A549 (cell line): ENCODE measurements at regions of chr11 and their contacts with region 1.

Region 1: DNA sequence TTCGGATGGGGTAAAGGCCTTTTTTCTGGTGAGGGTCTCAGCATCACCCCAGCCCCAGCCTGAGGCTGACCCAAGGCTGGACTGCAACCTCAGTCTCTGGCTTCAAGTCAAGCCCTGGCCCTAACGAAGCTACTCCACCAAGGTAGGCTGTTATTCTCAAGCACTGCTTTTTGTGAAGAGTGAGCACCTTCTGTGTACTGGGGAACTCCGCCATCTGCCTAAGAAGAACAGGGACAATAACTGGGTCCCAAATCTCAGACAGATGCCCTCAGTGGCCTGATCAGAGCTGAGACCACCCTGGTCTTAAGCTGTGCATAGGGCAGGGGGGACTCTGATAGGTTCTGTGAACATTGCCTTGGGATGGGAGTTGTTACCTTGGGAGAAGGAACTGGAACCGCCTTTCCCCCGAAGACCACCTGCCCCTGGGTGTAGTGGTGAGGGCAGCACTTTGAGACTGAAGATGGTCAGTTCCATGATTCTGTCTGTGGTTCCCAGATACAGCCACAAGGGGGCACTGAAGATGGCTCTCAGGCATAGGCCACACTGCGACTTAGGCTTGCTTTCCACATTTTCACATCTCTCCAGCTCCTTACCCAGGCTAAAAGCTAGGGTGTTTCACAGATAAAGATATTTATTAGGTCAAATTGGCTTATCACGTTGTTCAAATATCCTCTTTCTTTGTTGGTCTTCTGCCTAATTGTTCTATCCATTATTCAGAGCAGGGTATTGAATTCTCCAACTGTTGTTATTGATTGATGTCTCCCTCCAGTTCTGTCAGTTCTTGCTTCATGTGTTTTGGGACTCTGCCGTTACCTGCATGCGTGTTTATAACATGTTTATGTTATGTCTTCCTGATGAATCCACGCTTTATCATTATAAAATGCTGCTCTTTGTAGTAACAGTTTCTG is 11.8 kb upstream of the UVRAG start:
- DNase-seq: peak; percentile 68 to 82
- ATAC-seq: peak; percentile 87 to 98
- H3K4me3 ChIP-seq: no peak overlapping the region
- H3K27ac ChIP-seq: no peak overlapping the region
- H3K4me1 ChIP-seq: no peaks in the 10 kb centered on the region
- CTCF ChIP-seq: peak; percentile 84
- EP300 ChIP-seq: no peak
- POLR2A ChIP-seq: no peak
- RAD21 ChIP-seq: peak; percentile 76 to 83

Region 2: GRCh38 chr11:75560644-75561043 is 242.5 kb before region 1 on chr11:
- CTCF ChIA-PET with region 1: no interaction called
- POLR2A ChIA-PET with region 1: no interaction called
- DNase-seq: no peak
- ATAC-seq: no peak
- H3K4me3 ChIP-seq: no peak overlapping the region
- H3K27ac ChIP-seq: peak overlapping the region in 1 of 2 experiments; percentile 97; a peak in 3 of 6 replicates
- H3K4me1 ChIP-seq: peaks cover 54% of the 10 kb centered on the region
- CTCF ChIP-seq: no peak
- EP300 ChIP-seq: no peak
- POLR2A ChIP-seq: no peak
- RAD21 ChIP-seq: no peak

Region 3: DNA sequence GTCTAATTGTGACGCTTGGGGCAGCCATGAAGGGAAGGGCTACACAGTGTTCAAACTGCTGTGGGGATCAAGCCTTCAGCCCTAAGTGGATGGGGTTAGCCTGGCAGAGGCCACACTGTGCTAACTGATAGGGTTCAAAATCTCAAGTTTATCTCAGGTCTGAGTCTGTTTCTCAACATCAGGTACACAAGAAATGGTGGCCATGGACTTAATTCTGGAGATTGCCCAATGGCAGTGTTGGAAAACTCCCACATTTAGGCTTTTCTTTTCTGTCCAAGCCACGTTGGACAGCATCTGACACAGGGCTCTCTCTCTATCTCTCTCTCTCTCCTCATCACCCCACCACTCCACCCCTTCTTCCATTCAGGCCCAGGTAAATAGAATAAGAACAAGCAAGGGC is 45.5 kb before region 1 on chr11:
- CTCF ChIA-PET with region 1: no interaction called
- POLR2A ChIA-PET with region 1: no interaction called
- DNase-seq: no peak
- ATAC-seq: no peak
- H3K4me3 ChIP-seq: no peak overlapping the region
- H3K27ac ChIP-seq: no peak overlapping the region
- H3K4me1 ChIP-seq: peaks cover 10% of the 10 kb centered on the region; the same call in 2 of the 3 replicates
- CTCF ChIP-seq: no peak
- EP300 ChIP-seq: no peak
- POLR2A ChIP-seq: no peak
- RAD21 ChIP-seq: no peak

Region 4: DNA sequence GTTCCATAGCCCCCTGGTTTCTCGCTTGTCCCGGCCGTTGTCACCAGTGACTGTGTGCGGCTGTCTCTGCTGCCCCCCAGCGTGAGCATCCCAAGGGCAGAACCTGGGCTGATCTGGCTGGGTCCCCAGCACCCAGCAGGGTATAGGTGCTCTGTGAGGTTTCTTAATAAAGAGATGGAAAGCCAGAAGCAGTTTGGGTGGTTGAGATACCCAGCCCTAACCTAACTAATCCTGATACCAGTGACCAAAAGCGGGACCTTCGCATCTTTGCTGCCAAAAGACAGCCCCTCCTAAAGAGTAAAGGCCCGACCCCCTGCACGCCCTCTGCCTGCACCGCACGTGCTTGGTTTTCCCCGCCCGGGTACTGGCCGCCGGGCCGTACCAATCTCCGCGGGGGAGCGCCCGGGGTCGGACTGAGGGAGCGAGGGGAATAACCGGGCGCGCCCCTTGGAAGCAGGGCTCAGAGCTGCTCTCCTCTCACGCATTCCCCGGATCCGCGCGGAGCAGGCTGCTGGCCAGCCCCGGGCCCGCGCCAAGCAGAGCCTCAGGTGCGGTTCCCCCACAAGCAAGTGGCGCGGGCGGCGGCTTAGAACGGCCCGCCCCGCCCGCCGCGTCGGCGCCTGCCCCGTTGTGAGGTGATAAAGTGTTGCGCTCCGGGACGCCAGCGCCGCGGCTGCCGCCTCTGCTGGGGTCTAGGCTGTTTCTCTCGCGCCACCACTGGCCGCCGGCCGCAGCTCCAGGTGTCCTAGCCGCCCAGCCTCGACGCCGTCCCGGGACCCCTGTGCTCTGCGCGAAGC is 34.9 kb before region 1 on chr11 and contains the start of gene DGAT2:
- CTCF ChIA-PET with region 1: interaction called, 19 read pairs
- POLR2A ChIA-PET with region 1: no interaction called
- DNase-seq: peak; percentile 73 to 83
- ATAC-seq: peak; percentile 75 to 93
- H3K4me3 ChIP-seq: peak within 1 kb of the TSS; percentile 51
- H3K27ac ChIP-seq: peak within 1 kb of the TSS; percentile 91 to 93
- H3K4me1 ChIP-seq: peaks cover 11% of the 10 kb centered on the region; the same call in 2 of the 3 replicates
- CTCF ChIP-seq: peak; percentile 17
- EP300 ChIP-seq: no peak
- POLR2A ChIP-seq: no peak; the same call in 1 of the 2 replicates
- RAD21 ChIP-seq: peak; percentile 40 to 41; a peak in 2 of 5 replicates
- polyA plus RNA-seq, gene DGAT2: 1.6 and 2.7 TPM in 2 replicates

Region 5: GRCh38 chr11:75789521-75789920 is 13.6 kb before region 1 on chr11:
- CTCF ChIA-PET with region 1: interaction called, 43 read pairs
- POLR2A ChIA-PET with region 1: no interaction called
- DNase-seq: no peak
- ATAC-seq: no peak
- H3K4me3 ChIP-seq: no peak overlapping the region
- H3K27ac ChIP-seq: no peak overlapping the region
- H3K4me1 ChIP-seq: peaks cover 15% of the 10 kb centered on the region
- CTCF ChIP-seq: no peak
- EP300 ChIP-seq: no peak
- POLR2A ChIP-seq: no peak
- RAD21 ChIP-seq: no peak

Region 6: GRCh38 chr11:75814686-75815344 is 11.6 kb after region 1 on chr11 and contains the start of gene UVRAG:
- CTCF ChIA-PET with region 1: interaction called, 20 read pairs
- POLR2A ChIA-PET with region 1: interaction called, 3 read pairs
- DNase-seq: peak; percentile 99
- ATAC-seq: peak; percentile 92 to 97
- H3K4me3 ChIP-seq: peak within 1 kb of the TSS; percentile 96
- H3K27ac ChIP-seq: peak within 1 kb of the TSS; percentile 89 to 92
- H3K4me1 ChIP-seq: peaks cover 18% of the 10 kb centered on the region; the same call in 2 of the 3 replicates
- CTCF ChIP-seq: no peak
- EP300 ChIP-seq: no peak
- POLR2A ChIP-seq: peak; percentile 45
- RAD21 ChIP-seq: no peak
- polyA plus RNA-seq, gene UVRAG: 12.4 and 14.1 TPM in 2 replicates

Region 7: GRCh38 chr11:75826461-75827230 is 23.5 kb after region 1 on chr11:
- CTCF ChIA-PET with region 1: interaction called, 13 read pairs
- POLR2A ChIA-PET with region 1: no interaction called
- DNase-seq: no peak
- ATAC-seq: no peak
- H3K4me3 ChIP-seq: no peak overlapping the region
- H3K27ac ChIP-seq: no peak overlapping the region
- H3K4me1 ChIP-seq: peaks cover 7% of the 10 kb centered on the region; the same call in 2 of the 3 replicates
- CTCF ChIP-seq: no peak
- EP300 ChIP-seq: no peak
- POLR2A ChIP-seq: no peak
- RAD21 ChIP-seq: no peak

Region 8: DNA sequence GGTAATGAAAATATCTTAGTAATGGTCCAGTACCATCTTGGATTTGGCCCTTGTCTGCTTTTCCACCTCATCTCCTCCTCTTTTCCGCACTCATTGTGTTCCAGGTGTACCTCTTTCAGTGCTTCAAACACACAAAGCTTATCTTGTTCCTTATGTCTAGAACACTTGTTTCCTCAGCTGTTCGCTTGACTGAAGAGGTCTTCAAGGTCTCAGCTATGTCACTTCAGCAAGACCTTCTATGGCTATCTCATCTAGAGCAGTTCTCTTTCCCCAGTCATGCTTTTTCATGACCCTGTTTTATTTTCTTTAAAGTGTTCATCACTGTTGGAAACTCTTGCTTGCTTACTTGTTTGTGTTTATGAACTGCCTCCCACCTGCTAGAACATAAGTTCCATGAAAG is 59.3 kb after region 1 on chr11:
- CTCF ChIA-PET with region 1: interaction called, 46 read pairs
- POLR2A ChIA-PET with region 1: no interaction called
- DNase-seq: no peak
- ATAC-seq: no peak
- H3K4me3 ChIP-seq: no peak overlapping the region
- H3K27ac ChIP-seq: no peak overlapping the region
- H3K4me1 ChIP-seq: peaks cover 10% of the 10 kb centered on the region; the same call in 2 of the 3 replicates
- CTCF ChIP-seq: no peak
- EP300 ChIP-seq: no peak
- POLR2A ChIP-seq: no peak
- RAD21 ChIP-seq: no peak

Region 9: GRCh38 chr11:75902631-75903030 is 99.5 kb after region 1 on chr11:
- CTCF ChIA-PET with region 1: no interaction called
- POLR2A ChIA-PET with region 1: no interaction called
- DNase-seq: no peak
- ATAC-seq: no peak
- H3K4me3 ChIP-seq: no peak overlapping the region
- H3K27ac ChIP-seq: no peak overlapping the region
- H3K4me1 ChIP-seq: no peaks in the 10 kb centered on the region
- CTCF ChIP-seq: no peak
- EP300 ChIP-seq: no peak
- POLR2A ChIP-seq: no peak
- RAD21 ChIP-seq: no peak